ENCODE measurements at regions of chr6 and their contacts with region 1.

Region 1: GRCh38 chr6:105363100-105363754 is 39.7 kb downstream of the PREP start:
- DNase-seq: no peak
- H3K4me3 ChIP-seq: no peak overlapping the region
- H3K27ac ChIP-seq: no peak overlapping the region
- H3K4me1 ChIP-seq: no peaks in the 10 kb centered on the region
- H3K27me3 ChIP-seq: peaks cover 0 to 1% (median 0%) of the 10 kb centered on the region in 4 experiments; a peak in 1 of 7 replicates
- CTCF ChIP-seq: peak in 2 of 3 experiments; percentile 14 to 15; a peak in 2 of 4 replicates
- EP300 ChIP-seq: no peak
- POLR2A ChIP-seq: no peak
- RAD21 ChIP-seq: peak; percentile 46 to 49

Region 2: GRCh38 chr6:105209950-105210706 is 153.1 kb before region 1 on chr6:
- CTCF ChIA-PET with region 1: no interaction called
- POLR2A ChIA-PET with region 1: no interaction called
- DNase-seq: no peak
- H3K4me3 ChIP-seq: no peak overlapping the region
- H3K27ac ChIP-seq: no peak overlapping the region
- H3K4me1 ChIP-seq: no peaks in the 10 kb centered on the region
- H3K27me3 ChIP-seq: no peaks in the 10 kb centered on the region
- CTCF ChIP-seq: no peak
- EP300 ChIP-seq: no peak
- POLR2A ChIP-seq: no peak
- RAD21 ChIP-seq: no peak

Region 3: DNA sequence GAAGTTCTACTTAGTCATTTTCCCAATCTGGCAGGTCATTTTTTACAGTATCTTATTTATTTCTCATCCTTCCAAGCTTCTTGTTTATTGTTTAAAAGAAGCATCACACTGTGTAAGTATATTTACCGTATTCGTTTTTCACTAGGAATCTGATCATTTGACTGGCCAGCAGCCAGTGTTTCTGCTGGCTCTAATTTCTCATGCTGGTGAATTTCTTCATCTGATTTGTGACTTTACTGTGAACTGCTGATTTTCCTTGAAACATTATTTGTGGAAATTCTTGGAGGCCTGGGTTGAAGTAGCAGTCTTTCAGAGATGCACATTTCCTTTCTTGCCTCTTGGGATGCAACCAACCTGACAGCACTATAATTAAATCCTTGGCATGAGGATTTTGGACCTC is 26.2 kb before region 1 on chr6:
- CTCF ChIA-PET with region 1: no interaction called
- POLR2A ChIA-PET with region 1: no interaction called
- DNase-seq: no peak
- H3K4me3 ChIP-seq: no peak overlapping the region
- H3K27ac ChIP-seq: no peak overlapping the region
- H3K4me1 ChIP-seq: no peaks in the 10 kb centered on the region
- H3K27me3 ChIP-seq: no peaks in the 10 kb centered on the region
- CTCF ChIP-seq: no peak
- EP300 ChIP-seq: no peak
- POLR2A ChIP-seq: no peak
- RAD21 ChIP-seq: no peak

Region 4: DNA sequence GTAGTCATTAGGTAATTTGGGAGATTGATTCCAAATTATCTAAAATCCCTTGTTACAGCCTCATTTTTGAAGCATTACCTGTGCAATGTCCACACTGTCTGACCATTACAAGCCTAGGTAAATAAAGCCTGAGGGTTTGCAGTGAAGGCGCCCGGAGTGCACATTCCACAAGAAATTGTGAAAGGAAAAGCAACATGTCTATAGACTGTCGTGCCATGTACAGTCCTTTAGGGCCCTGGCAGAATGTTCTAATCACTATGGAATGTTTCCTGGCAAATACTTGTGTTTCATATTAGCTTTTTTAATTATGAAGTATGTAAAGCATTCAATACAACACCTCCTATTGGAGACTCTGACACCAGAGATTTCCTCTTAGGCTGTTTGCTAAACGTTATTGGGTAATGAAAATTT is 10.8 kb after region 1 on chr6:
- CTCF ChIA-PET with region 1: interaction called, 17 read pairs
- POLR2A ChIA-PET with region 1: interaction called, 3 read pairs
- DNase-seq: no peak
- H3K4me3 ChIP-seq: no peak overlapping the region
- H3K27ac ChIP-seq: no peak overlapping the region
- H3K4me1 ChIP-seq: no peaks in the 10 kb centered on the region
- H3K27me3 ChIP-seq: no peaks in the 10 kb centered on the region
- CTCF ChIP-seq: no peak
- EP300 ChIP-seq: no peak
- POLR2A ChIP-seq: no peak
- RAD21 ChIP-seq: no peak

Region 5: GRCh38 chr6:105526198-105526872 is 163.1 kb after region 1 on chr6:
- CTCF ChIA-PET with region 1: no interaction called
- POLR2A ChIA-PET with region 1: no interaction called
- DNase-seq: no peak
- H3K4me3 ChIP-seq: no peak overlapping the region
- H3K27ac ChIP-seq: no peak overlapping the region
- H3K4me1 ChIP-seq: no peaks in the 10 kb centered on the region
- H3K27me3 ChIP-seq: no peaks in the 10 kb centered on the region
- CTCF ChIP-seq: no peak
- EP300 ChIP-seq: no peak
- POLR2A ChIP-seq: no peak
- RAD21 ChIP-seq: no peak

Measured in H1 (cell line).